ENCODE measurements at regions of chr6 and their contacts with region 1.

Region 1: DNA sequence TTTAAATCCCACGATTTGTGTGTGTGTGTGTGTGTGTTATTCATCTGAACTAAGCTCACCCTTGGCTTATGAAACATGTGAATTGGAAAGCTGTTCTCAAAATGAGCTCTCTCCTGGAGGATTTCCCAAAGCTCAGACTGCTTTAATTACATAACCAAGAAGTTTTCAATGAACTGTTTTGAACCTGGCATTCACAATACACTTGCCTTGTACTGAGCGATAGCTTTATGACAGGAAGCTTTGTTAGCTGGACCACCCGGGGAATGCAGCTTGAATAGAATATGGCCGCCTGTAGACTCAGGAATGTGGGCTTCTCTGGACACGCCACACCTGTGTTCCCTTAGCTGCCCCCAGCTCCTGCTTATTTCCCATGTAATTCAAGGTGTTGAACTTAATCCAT is 71.4 kb upstream of the PREP start:
- DNase-seq: no peak
- ATAC-seq: no peak
- H3K4me3 ChIP-seq: no peak overlapping the region
- H3K27ac ChIP-seq: no peak overlapping the region
- H3K4me1 ChIP-seq: no peaks in the 10 kb centered on the region
- H3K27me3 ChIP-seq: no peaks in the 10 kb centered on the region
- CTCF ChIP-seq: no peak

Region 2: GRCh38 chr6:105608711-105609374 is 134.6 kb after region 1 on chr6:
- intact Hi-C with region 1: no loop called
- DNase-seq: no peak
- ATAC-seq: no peak
- H3K4me3 ChIP-seq: no peak overlapping the region
- H3K27ac ChIP-seq: peak overlapping the region; percentile 19
- H3K4me1 ChIP-seq: no peaks in the 10 kb centered on the region
- H3K27me3 ChIP-seq: no peaks in the 10 kb centered on the region
- CTCF ChIP-seq: no peak

Region 3: DNA sequence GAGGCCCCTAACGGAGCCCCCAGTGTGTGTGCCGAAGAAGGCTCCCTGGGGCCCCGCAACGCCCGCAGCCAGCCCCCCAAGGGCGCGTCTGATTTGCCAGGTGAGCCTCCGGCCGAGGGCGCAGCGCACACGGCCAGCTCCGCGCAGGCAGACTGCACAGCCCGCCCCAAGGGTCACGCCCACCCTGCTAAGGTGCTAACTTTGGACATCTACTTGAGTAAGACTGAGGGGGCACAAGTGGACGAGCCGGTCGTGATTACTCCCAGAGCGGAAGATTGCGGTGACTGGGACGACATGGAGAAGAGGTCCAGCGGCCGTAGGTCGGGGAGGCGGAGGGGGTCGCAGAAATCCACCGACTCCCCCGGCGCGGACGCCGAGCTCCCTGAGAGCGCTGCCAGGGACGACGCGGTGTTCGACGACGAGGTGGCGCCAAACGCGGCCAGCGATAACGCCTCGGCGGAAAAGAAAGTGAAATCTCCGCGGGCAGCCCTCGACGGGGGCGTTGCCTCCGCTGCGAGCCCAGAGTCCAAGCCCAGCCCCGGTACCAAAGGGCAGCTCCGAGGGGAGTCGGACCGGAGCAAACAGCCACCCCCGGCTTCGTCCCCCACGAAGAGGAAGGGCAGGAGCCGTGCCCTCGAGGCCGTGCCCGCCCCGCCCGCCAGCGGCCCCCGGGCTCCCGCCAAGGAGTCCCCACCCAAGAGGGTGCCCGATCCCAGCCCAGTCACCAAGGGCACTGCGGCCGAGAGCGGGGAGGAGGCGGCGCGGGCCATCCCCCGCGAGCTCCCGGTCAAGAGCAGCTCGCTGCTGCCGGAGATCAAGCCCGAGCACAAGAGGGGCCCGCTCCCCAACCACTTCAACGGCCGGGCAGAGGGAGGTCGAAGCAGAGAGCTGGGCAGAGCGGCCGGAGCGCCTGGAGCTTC is 1038.1 kb after region 1 on chr6:
- intact Hi-C with region 1: loop called (anchors 10 kb)
- DNase-seq: peak; percentile 94
- ATAC-seq: peak; percentile 85
- H3K4me3 ChIP-seq: peak overlapping the region; percentile 75
- H3K27ac ChIP-seq: peak overlapping the region; percentile 92
- H3K4me1 ChIP-seq: peaks cover 39% of the 10 kb centered on the region
- H3K27me3 ChIP-seq: no peaks in the 10 kb centered on the region
- CTCF ChIP-seq: peak; percentile 32